Heart right ventricle (tissue), 16 donors: ENCODE measurements at regions of chr11 and their contacts with region 1.

Region 1: DNA sequence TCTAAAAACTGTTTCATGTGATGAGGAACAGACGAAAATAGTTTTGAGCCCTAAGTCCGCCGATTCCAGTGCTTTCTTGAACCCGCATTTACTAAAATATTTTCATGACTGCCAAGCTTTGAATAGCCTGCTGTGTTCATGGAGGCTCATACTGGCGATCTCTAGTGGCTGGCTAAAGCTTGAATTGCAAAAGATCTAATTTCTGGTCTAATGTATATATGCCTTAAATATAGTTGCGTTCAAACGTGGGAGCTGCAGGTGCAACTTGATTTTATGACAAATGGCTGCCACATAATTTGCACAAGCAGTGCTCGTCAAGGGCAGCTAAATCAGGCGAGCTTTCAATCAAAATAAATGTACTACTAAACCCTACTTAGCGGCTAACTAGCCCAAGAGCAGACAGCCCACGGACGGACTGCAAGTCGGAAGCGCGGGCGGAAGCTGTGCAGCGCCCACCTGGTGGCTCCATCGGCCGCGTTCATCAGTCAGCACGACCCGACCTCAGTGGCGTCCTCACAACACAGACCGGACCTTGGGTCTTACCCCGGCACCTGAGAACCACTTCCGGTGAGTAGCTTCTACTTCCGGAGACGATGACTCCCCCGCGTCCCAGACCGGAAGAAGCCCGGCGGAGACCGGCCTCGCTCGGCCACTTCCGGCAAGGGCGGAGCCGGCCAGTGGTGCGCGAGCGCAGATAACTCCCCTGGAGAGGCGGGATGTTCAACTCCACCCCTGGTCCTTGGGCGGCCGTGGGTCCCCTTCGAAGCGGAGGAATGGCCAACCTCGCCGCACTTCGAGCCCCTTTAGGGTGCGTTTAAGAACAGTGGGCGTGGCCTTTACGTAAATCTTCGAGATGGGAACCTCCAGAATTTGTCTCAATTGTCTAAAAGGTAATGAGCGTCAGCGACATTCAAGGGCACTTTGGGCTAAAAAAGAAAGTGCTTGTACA is 6.1 kb downstream of the RPL27A start:
- DNase-seq: peak; percentile 95
- ATAC-seq: peak; percentile 96 to 99 (median 98)
- H3K4me3 ChIP-seq: peak overlapping the region; percentile 15 to 74 (median 62)
- H3K27ac ChIP-seq: peak overlapping the region; percentile 72 to 90 (median 84)
- H3K4me1 ChIP-seq: peaks cover 9 to 48% (median 30%) of the 10 kb centered on the region in 9 donors
- H3K27me3 ChIP-seq: no peaks in the 10 kb centered on the region
- CTCF ChIP-seq: peak in 4 of 9 donors; percentile 25 to 60 (median 48)

Region 2: GRCh38 chr11:8503910-8504364 is 184.8 kb before region 1 on chr11:
- intact Hi-C with region 1: no loop called
- DNase-seq: no peak
- ATAC-seq: peak in 2 of 8 donors; percentile 31 to 56
- H3K4me3 ChIP-seq: no peak overlapping the region
- H3K27ac ChIP-seq: peak overlapping the region in 3 of 10 donors; percentile 5 to 59 (median 17)
- H3K4me1 ChIP-seq: peaks cover 0 to 14% (median 6%) of the 10 kb centered on the region in 9 donors
- H3K27me3 ChIP-seq: no peaks in the 10 kb centered on the region
- CTCF ChIP-seq: no peak

Region 3: GRCh38 chr11:8577791-8578581 is 110.7 kb before region 1 on chr11:
- intact Hi-C with region 1: loop called in 1 of 10 experiments (anchors 10 kb)
- DNase-seq: no peak
- ATAC-seq: no peak
- H3K4me3 ChIP-seq: no peak overlapping the region
- H3K27ac ChIP-seq: no peak overlapping the region
- H3K4me1 ChIP-seq: no peaks in the 10 kb centered on the region
- H3K27me3 ChIP-seq: no peaks in the 10 kb centered on the region
- CTCF ChIP-seq: no peak

Region 4: DNA sequence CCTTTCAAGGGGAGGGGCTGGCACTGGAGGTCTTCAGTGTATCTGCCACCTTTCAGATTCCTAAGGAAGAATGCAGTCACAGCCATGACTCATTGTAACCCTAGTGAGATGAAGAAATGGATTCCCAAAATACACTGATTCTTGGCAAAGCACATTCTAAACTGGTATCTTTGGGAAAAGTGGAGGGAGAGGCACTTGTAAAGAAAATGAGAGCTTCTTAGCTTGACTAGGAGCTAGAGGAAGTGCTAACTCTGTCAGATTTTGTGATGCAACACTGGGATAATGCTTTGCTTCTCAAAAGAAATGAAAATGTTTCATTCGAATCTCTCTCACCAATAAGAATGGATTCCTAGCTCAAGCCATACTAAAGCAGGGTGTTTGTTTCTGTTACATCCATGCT is 300.8 kb after region 1 on chr11:
- intact Hi-C with region 1: no loop called
- DNase-seq: no peak
- ATAC-seq: no peak
- H3K4me3 ChIP-seq: no peak overlapping the region
- H3K27ac ChIP-seq: no peak overlapping the region
- H3K4me1 ChIP-seq: peaks cover 0 to 9% (median 0%) of the 10 kb centered on the region in 9 donors
- H3K27me3 ChIP-seq: no peaks in the 10 kb centered on the region
- CTCF ChIP-seq: no peak